Aorta (tissue), 5 donors: ENCODE measurements at regions of chr9 and their contacts with region 1.

Region 1: DNA sequence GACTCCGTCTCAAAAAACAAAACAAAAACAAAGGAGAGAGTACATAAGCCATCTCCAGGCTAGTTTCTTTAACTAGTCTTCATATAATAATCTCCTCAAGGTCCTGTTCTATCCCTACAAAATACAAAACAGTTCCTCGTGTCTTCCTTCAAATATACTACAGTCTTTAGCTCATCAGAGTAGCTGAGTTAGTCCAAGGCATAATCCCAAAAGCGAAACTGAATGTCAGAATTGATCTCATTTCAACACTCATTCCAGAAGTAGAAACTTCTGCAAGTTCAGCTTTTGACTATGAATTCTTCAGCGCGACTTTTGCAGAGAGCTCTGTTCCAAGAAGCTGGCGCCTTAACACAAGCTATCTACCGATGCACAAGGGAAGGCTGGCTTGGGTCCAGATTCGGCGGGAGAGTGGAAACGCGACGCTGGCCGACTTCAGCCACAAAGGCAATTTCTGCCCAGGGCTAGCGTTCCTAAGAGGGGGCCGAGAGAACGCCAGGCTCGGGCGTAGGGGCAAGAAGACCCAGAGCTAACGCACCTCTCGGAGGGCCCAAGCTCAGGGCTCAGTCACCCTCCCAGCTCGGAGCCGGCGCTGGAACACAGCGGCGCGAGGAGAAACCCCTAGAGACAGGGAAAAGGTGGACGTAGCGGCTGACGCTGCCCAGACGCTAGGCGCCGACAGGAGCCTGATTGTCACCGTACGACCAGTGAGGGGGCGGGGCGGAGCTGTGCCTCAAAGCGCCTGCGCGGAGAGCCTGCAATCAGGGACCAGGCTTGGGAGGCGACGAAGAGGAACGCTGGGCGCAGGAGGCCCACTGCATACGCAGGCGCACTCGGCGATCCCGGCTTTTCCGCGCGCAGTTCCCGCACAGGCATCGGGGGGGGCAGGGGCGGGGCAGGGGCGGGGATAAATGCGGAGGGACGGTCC is 469 bp upstream of the HSDL2 start:
- DNase-seq: peak; percentile 100
- ATAC-seq: peak; percentile 99
- H3K4me3 ChIP-seq: peak overlapping the region; percentile 50 to 60
- H3K27ac ChIP-seq: peak overlapping the region; percentile 45 to 62
- H3K4me1 ChIP-seq: peaks cover 0 to 3% of the 10 kb centered on the region in 2 donors
- H3K27me3 ChIP-seq: no peaks in the 10 kb centered on the region

Region 2: GRCh38 chr9:112443200-112443599 is 63.8 kb after region 1 on chr9:
- intact Hi-C with region 1: loop called in 1 of 2 experiments (anchors 5 kb)
- DNase-seq: no peak
- ATAC-seq: no peak
- H3K4me3 ChIP-seq: no peak overlapping the region
- H3K27ac ChIP-seq: no peak overlapping the region
- H3K4me1 ChIP-seq: no peaks in the 10 kb centered on the region
- H3K27me3 ChIP-seq: no peaks in the 10 kb centered on the region

Region 3: GRCh38 chr9:112486221-112487007 is 107.0 kb after region 1 on chr9 and contains the start of gene KIAA1958:
- intact Hi-C with region 1: loop called in 1 of 2 experiments (anchors 2 kb)
- DNase-seq: peak; percentile 86 to 94
- ATAC-seq: peak; percentile 84
- H3K4me3 ChIP-seq: peak within 1 kb of the TSS; percentile 92 to 93
- H3K27ac ChIP-seq: peak within 1 kb of the TSS in 1 of 2 donors; percentile 23
- H3K4me1 ChIP-seq: peaks cover 0 to 2% of the 10 kb centered on the region in 2 donors
- H3K27me3 ChIP-seq: no peaks in the 10 kb centered on the region
- total RNA-seq, gene KIAA1958: 6.2 to 7.9 TPM